ENCODE measurements at regions of chr13 and their contacts with region 1.

Region 1: GRCh38 chr13:20182231-20182846 is 10.4 kb downstream of the GJB2 start:
- DNase-seq: peak in 6 of 7 donors; percentile 51 to 72 (median 64)
- H3K4me3 ChIP-seq: no peak overlapping the region
- H3K27ac ChIP-seq: no peak overlapping the region
- H3K4me1 ChIP-seq: no peaks in the 10 kb centered on the region
- H3K27me3 ChIP-seq: peaks cover 27% of the 10 kb centered on the region
- CTCF ChIP-seq: peak; percentile 64 to 86 (median 65)
- POLR2A ChIP-seq: no peak

Region 2: DNA sequence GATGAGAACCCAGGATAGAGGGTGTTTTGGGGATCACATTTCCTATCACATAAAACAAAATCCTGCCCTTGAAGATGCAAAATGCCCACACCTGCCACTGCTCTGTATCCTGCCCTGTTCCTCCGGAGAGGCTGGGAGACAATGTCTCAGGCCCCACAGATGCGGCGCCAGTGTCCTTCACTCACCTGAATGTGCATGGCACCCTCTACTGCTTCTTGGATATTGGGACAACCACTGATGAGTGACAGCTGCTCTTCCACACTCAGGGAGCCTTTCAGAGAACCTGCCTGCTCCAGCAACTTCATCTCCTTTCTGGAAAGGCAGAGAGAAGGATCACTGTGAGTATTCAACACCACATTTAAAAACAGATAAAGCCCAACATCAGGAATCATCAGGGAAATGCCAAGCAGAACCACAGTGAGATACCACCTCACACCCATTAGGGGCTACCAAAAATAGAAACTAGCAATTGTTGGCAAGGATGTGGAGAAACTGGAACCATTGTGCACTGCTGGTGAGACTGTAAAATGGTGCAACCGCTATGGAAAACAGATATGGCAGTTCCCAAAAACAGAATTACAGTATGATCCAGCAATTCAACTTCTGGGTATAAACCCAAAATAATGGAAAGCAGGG is 307.0 kb after region 1 on chr13:
- intact Hi-C with region 1: loop called in 1 of 2 experiments (anchors 10 kb)
- DNase-seq: peak in 3 of 7 donors; percentile 36 to 43 (median 43)
- H3K4me3 ChIP-seq: no peak overlapping the region
- H3K27ac ChIP-seq: no peak overlapping the region
- H3K4me1 ChIP-seq: no peaks in the 10 kb centered on the region
- H3K27me3 ChIP-seq: no peaks in the 10 kb centered on the region
- CTCF ChIP-seq: peak in 4 of 6 experiments; percentile 21 to 48 (median 34)
- POLR2A ChIP-seq: no peak

Measured in adrenal gland (tissue), 19 donors.